Posterior vena cava (tissue), 2 donors: ENCODE measurements at regions of chr1 and their contacts with region 1.

Region 1: DNA sequence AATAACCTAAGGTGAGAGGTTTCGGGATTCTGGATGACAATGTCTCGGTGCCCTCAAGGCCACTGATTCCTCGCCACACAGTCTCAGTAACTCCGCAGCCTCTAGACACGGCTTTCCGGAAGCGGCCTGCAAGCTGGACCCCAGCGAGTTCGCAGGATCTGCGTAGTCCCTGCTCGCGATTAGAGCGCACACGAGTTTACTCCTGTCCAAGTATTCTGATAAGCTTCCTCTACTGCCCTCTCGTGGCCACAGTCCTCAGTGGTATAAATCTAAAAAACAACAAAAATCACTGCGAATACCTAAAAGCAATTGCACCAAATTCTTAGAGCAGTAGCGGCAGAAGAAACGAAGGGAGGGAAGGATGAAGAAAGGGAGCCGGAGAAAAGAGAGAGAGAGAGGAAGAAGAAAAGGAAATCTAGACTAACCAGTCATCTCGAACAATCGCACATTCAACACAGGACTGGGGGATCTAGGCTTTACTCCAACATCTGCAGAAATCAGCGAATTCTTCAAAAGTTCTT is 1.1 kb upstream of the PLXNA2 start:
- DNase-seq: peak; percentile 96

Region 2: GRCh38 chr1:207876131-207876530 is 369.1 kb before region 1 on chr1:
- intact Hi-C with region 1: loop called in 1 of 2 experiments (anchors 10 kb)
- DNase-seq: no peak

Region 3: GRCh38 chr1:208132287-208132883 is 112.9 kb before region 1 on chr1:
- intact Hi-C with region 1: loop called in 1 of 2 experiments (anchors 5 kb)
- DNase-seq: peak; percentile 85

Region 4: GRCh38 chr1:208747979-208748378 is 502.7 kb after region 1 on chr1:
- intact Hi-C with region 1: no loop called
- DNase-seq: no peak

Region 5: DNA sequence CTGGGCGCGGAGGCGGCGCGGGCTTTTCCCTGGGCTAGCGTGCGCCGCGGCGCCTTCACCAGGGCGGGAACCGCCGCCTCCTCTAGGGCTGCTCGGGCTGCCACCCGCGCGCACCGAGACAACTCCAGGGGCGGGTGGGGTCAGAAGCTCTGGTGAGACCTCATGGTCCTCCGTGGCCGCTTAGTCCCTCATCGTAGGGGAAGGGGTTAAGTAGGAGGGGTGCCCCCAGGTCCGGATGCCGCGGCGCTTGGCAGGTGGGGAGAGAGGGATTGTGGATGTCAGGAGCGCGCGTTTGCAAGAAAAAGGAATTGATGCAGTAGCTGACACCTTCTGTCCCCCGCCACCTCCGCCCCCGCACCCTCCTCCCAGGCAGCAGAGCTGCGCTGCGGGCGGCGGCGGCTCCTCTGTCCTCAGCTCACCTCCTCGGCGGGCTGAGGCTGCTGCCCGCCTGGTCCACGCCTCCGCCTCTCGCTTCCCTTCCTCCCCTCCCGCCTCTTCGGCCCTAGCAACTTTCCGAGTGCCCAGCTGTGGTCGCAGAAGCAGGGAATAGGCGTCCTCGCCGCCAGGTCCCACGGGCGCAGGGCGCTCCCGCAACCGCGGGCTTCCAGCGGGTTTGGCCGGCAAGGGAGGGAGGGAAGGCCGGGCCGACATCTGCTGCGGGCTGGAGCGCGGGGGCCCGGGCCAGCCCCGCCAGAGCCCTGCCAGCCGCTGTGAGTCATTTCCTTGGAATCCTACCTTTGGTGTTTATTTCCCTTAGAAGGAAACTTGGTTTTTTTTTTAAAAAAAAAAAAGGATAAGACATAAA is 1988.2 kb after region 1 on chr1:
- intact Hi-C with region 1: loop called in 1 of 2 experiments (anchors 10 kb)
- DNase-seq: no peak